ENCODE measurements at regions of chr11 and their contacts with region 1.

Region 1: GRCh38 chr11:61967116-61967923 is at the start of gene FTH1:
- DNase-seq: peak; percentile 78
- ATAC-seq: peak; percentile 59
- H3K4me3 ChIP-seq: peak within 1 kb of the TSS; percentile 92 to 99 (median 96)
- H3K27ac ChIP-seq: peak within 1 kb of the TSS; percentile 99
- H3K4me1 ChIP-seq: peaks cover 71% of the 10 kb centered on the region
- H3K27me3 ChIP-seq: no peaks in the 10 kb centered on the region; a peak in 1 of 5 replicates
- CTCF ChIP-seq: peak; percentile 6; the same call in 1 of the 2 replicates
- EP300 ChIP-seq: no peak; a peak in 1 of 4 replicates
- POLR2A ChIP-seq: peak; percentile 90 to 95
- RAD21 ChIP-seq: 0 out of 2 replicates have a peak, but pooled peaks have one; percentile 59
- total RNA-seq, gene FTH1: 544 and 607 TPM in 2 replicates

Region 2: DNA sequence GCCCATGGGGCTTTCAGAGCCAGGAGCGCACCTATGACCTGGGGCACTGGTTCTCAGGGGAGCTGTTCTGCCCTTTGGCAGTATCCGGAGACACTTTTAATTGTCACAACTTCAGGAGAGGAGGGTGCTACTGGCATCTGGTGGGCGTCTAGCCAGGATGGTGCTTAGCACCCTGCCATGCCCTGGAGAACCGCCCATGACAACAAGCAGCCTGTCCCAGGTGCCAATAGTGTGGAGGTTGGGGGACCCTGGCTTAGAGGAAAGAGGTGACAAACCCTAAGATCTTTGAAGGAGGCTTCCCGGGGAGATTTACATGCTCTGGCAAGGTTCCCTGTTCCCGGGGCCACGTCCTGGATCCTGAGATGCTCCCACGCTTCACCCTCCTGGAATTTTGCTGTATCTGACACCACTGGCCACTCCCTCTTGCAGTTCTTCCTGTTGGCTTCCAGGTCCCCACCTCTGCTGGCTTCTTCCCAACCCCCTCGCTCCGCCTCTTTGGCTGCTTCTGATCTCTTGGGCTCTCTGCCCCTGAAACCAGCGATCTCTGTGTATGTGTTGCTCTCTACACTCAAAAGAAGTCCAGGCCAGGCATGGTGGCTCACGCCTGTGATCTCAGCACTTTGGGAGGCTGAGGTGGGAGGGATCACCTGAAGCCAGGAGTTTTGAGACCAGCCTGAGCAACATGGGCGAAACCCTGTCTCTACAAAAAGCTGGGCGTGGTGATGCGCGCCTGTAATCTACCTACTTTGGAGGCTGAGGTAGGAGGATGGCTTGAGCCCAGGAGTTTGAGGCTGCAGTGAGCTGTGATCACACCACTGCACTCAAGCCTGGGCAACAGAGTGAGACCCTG is 107.0 kb before region 1 on chr11:
- CTCF ChIA-PET with region 1: no interaction called
- POLR2A ChIA-PET with region 1: no interaction called
- in situ Hi-C with region 1: no loop called
- intact Hi-C with region 1: no loop called
- DNase-seq: no peak
- ATAC-seq: no peak
- H3K4me3 ChIP-seq: no peak overlapping the region
- H3K27ac ChIP-seq: no peak overlapping the region
- H3K4me1 ChIP-seq: no peaks in the 10 kb centered on the region
- H3K27me3 ChIP-seq: no peaks in the 10 kb centered on the region
- CTCF ChIP-seq: no peak
- EP300 ChIP-seq: no peak
- POLR2A ChIP-seq: no peak
- RAD21 ChIP-seq: no peak

Region 3: DNA sequence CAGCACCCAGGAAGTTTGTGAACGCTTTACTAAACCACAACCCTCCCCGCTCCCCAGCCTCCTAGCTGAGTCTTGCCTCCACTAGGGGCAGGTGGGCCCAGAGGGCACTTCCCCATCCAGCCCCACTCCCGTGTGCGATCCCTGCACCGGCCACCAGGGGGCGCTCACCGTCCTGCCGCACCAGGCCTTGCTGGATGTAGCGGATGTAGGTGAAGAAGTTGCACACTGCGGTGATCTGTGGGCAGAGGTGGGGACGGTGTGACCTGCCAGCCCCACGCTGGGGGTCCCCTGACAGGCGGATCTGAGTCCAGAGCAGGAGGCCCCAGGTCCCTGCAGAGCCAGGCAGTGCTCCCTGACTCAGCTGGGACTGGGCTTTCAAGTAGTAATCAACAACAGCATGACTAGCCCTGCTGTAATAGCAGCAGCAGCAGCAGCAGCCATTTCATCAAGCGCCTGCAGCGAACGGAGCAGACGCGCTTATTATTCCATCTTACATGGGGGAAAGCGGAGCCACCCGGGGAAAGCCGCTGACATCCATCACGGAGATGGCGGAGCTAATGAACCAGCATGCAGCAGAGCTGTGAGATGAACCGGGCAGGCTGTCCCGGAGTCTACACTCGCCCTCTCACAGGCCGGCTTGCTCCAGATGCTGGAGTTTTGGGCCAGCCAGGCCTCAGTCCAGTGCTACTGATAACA is 68.0 kb before region 1 on chr11:
- CTCF ChIA-PET with region 1: no interaction called
- POLR2A ChIA-PET with region 1: interaction called, 17 read pairs
- in situ Hi-C with region 1: no loop called
- intact Hi-C with region 1: no loop called
- DNase-seq: peak; percentile 72
- ATAC-seq: peak; percentile 85
- H3K4me3 ChIP-seq: no peak overlapping the region
- H3K27ac ChIP-seq: no peak overlapping the region
- H3K4me1 ChIP-seq: peaks cover 24% of the 10 kb centered on the region
- H3K27me3 ChIP-seq: no peaks in the 10 kb centered on the region
- CTCF ChIP-seq: peak; percentile 99
- EP300 ChIP-seq: no peak
- POLR2A ChIP-seq: no peak
- RAD21 ChIP-seq: peak; percentile 98

Region 4: DNA sequence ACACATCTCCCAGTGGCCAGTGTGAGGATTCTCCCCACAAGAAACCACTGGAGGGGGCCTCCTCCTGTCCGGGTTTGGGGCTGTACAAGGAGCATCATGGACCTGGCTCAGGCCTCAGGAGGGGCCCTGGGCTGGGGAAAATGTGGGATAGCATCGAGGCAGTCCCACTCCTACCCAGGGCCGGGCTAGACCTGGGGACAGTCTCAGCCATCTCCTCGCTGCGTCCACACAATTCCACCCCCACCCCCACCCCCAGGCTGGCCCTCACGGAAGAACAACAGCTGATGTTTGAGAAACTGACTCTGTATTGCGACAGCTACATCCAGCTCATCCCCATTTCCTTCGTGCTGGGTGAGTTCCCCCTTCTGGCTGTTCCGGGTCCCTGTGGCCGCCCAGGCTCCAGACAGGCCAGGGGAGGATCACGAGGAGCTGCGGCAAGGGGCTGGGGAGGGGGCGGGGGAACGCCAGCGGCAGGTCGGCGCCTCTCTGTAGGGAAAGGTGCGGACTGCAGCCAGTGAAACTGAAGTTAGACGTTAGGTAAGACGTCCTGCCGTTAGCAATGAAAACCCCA is 12.4 kb before region 1 on chr11:
- CTCF ChIA-PET with region 1: no interaction called
- POLR2A ChIA-PET with region 1: interaction called, 138 read pairs
- in situ Hi-C with region 1: no loop called
- intact Hi-C with region 1: no loop called
- DNase-seq: peak; percentile 59
- ATAC-seq: peak; percentile 65
- H3K4me3 ChIP-seq: peak overlapping the region; percentile 2 to 56 (median 2); a peak in 3 of 6 replicates
- H3K27ac ChIP-seq: no peak overlapping the region
- H3K4me1 ChIP-seq: peaks cover 20% of the 10 kb centered on the region
- H3K27me3 ChIP-seq: no peaks in the 10 kb centered on the region
- CTCF ChIP-seq: no peak
- EP300 ChIP-seq: no peak
- POLR2A ChIP-seq: no peak
- RAD21 ChIP-seq: no peak

Region 5: GRCh38 chr11:62013591-62014476 is 46.5 kb after region 1 on chr11:
- CTCF ChIA-PET with region 1: no interaction called
- POLR2A ChIA-PET with region 1: interaction called, 59 read pairs
- in situ Hi-C with region 1: no loop called
- intact Hi-C with region 1: no loop called
- DNase-seq: no peak
- ATAC-seq: no peak
- H3K4me3 ChIP-seq: no peak overlapping the region
- H3K27ac ChIP-seq: no peak overlapping the region
- H3K4me1 ChIP-seq: peaks cover 74% of the 10 kb centered on the region
- H3K27me3 ChIP-seq: no peaks in the 10 kb centered on the region
- CTCF ChIP-seq: no peak
- EP300 ChIP-seq: no peak
- POLR2A ChIP-seq: no peak
- RAD21 ChIP-seq: no peak

Region 6: GRCh38 chr11:62044639-62045121 is 77.4 kb after region 1 on chr11:
- CTCF ChIA-PET with region 1: no interaction called
- POLR2A ChIA-PET with region 1: interaction called, 11 read pairs
- in situ Hi-C with region 1: no loop called
- intact Hi-C with region 1: no loop called
- DNase-seq: no peak
- ATAC-seq: no peak
- H3K4me3 ChIP-seq: no peak overlapping the region
- H3K27ac ChIP-seq: no peak overlapping the region
- H3K4me1 ChIP-seq: peaks cover 46% of the 10 kb centered on the region
- H3K27me3 ChIP-seq: peaks cover 3 to 9% of the 10 kb centered on the region in 2 experiments; a peak in 4 of 5 replicates
- CTCF ChIP-seq: no peak
- EP300 ChIP-seq: no peak
- POLR2A ChIP-seq: no peak
- RAD21 ChIP-seq: no peak

Region 7: DNA sequence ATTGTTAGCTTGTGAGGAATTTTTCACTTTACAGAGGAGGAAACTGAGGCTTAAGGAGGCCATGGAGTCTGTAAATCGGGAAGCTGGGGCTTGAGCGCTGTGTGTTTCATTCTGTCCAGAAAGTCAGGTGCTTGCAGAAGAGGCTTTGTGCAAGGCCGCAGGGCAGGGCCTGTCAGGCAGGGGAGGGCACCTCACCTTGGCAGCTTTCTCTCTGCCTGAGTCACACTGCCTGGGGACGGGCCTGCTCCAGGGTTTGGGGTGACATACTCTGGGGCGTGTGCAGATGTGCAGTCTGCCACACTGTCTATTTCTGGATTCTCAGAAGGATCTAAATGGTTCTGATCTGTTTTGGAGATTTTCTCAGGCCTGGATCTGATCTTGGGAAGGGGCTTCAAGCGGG is 164.9 kb after region 1 on chr11:
- CTCF ChIA-PET with region 1: no interaction called
- POLR2A ChIA-PET with region 1: no interaction called
- in situ Hi-C with region 1: no loop called
- intact Hi-C with region 1: no loop called
- DNase-seq: no peak
- ATAC-seq: no peak
- H3K4me3 ChIP-seq: no peak overlapping the region
- H3K27ac ChIP-seq: no peak overlapping the region
- H3K4me1 ChIP-seq: no peaks in the 10 kb centered on the region
- H3K27me3 ChIP-seq: no peaks in the 10 kb centered on the region
- CTCF ChIP-seq: no peak
- EP300 ChIP-seq: no peak
- POLR2A ChIP-seq: no peak
- RAD21 ChIP-seq: no peak

Measured in HepG2 (cell line).